Activated CD4-positive, alpha-beta T cell treated with anti-CD3 and anti-CD28 coated beads for 36 hours (primary cell): ENCODE measurements at regions of chr1 and their contacts with region 1.

Region 1: GRCh38 chr1:32876341-32877210 is 5.9 kb upstream of the FNDC5 start:
- DNase-seq: peak; percentile 86
- ATAC-seq: peak; percentile 89
- H3K4me3 Mint-ChIP-seq: no peak overlapping the region
- H3K27ac Mint-ChIP-seq: no peak overlapping the region
- H3K4me1 Mint-ChIP-seq: no peaks in the 10 kb centered on the region
- H3K27me3 Mint-ChIP-seq: peaks cover 34% of the 10 kb centered on the region

Region 2: GRCh38 chr1:32892368-32893197 is 16.0 kb after region 1 on chr1:
- CTCF ChIA-PET with region 1: interaction called, 33 read pairs
- POLR2A ChIA-PET with region 1: no interaction called
- intact Hi-C with region 1: no loop called
- DNase-seq: peak; percentile 75
- ATAC-seq: peak; percentile 82
- H3K4me3 Mint-ChIP-seq: peak overlapping the region; percentile 36
- H3K27ac Mint-ChIP-seq: no peak overlapping the region
- H3K4me1 Mint-ChIP-seq: peaks cover 3% of the 10 kb centered on the region
- H3K27me3 Mint-ChIP-seq: peaks cover 48% of the 10 kb centered on the region

Region 3: GRCh38 chr1:33086384-33086850 is 209.8 kb after region 1 on chr1:
- CTCF ChIA-PET with region 1: interaction called, 7 read pairs
- POLR2A ChIA-PET with region 1: no interaction called
- intact Hi-C with region 1: loop called (anchors 1 kb)
- DNase-seq: peak; percentile 73
- ATAC-seq: peak; percentile 65
- H3K4me3 Mint-ChIP-seq: no peak overlapping the region
- H3K27ac Mint-ChIP-seq: no peak overlapping the region
- H3K4me1 Mint-ChIP-seq: peaks cover 23% of the 10 kb centered on the region
- H3K27me3 Mint-ChIP-seq: peaks cover 3% of the 10 kb centered on the region